PC-9 (cell line): ENCODE measurements at regions of chr19 and their contacts with region 1.

Region 1: GRCh38 chr19:10502524-10503001 is 593 bp downstream of the KEAP1 start:
- DNase-seq: peak; percentile 77 to 95
- H3K4me3 ChIP-seq: peak overlapping the region; percentile 82
- H3K27ac ChIP-seq: peak overlapping the region; percentile 94
- H3K4me1 ChIP-seq: peaks cover 16% of the 10 kb centered on the region
- H3K27me3 ChIP-seq: no peaks in the 10 kb centered on the region
- CTCF ChIP-seq: no peak

Region 2: GRCh38 chr19:10403137-10404021 is 99.2 kb before region 1 on chr19 and contains the start of gene CDC37:
- CTCF ChIA-PET with region 1: interaction called, 16 read pairs
- POLR2A ChIA-PET with region 1: no interaction called
- intact Hi-C with region 1: no loop called
- DNase-seq: peak; percentile 90 to 96
- H3K4me3 ChIP-seq: peak within 1 kb of the TSS; percentile 89
- H3K27ac ChIP-seq: peak within 1 kb of the TSS; percentile 39
- H3K4me1 ChIP-seq: peaks cover 20% of the 10 kb centered on the region
- H3K27me3 ChIP-seq: peaks cover 21% of the 10 kb centered on the region; the same call in 1 of the 2 replicates
- CTCF ChIP-seq: no peak
- total RNA-seq, gene CDC37: 156 and 191 TPM in 2 replicates

Region 3: GRCh38 chr19:10543420-10544241 is 41.1 kb after region 1 on chr19 and contains the start of gene ATG4D:
- CTCF ChIA-PET with region 1: interaction called, 6 read pairs
- POLR2A ChIA-PET with region 1: no interaction called
- intact Hi-C with region 1: loop called (anchors 5 kb)
- DNase-seq: peak; percentile 87 to 95
- H3K4me3 ChIP-seq: peak within 1 kb of the TSS; percentile 82
- H3K27ac ChIP-seq: no peak within 1 kb of the TSS
- H3K4me1 ChIP-seq: peaks cover 6% of the 10 kb centered on the region; the same call in 1 of the 2 replicates
- H3K27me3 ChIP-seq: no peaks in the 10 kb centered on the region
- CTCF ChIP-seq: no peak
- total RNA-seq, gene ATG4D: 33.1 and 40.2 TPM in 2 replicates

Region 4: DNA sequence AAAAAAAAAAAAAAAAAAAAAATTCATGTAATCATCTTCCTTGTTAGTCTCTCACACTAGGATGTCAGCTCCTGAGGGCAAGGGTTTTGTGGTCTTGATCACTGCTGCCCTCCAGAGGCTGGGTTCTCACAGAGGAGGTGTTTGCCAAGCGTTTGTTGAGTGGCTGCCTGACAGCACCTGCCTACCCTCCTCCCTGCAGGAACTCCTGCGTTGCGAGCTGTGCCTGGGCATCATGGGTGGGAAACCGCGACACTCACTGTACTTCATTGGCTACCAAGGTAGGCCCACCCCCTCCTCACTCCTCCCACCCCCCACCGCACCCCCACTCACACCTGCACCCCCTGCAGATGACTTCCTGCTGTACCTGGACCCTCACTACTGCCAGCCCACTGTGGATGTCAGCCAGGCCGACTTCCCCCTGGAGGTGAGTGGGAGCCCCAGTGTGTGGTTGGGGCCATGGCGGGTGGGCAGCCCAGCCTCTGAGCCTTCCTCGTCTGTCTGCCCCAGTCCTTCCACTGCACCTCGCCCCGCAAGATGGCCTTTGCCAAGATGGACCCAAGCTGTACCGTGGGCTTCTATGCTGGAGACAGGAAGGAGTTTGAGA is 49.2 kb after region 1 on chr19:
- CTCF ChIA-PET with region 1: interaction called, 17 read pairs
- POLR2A ChIA-PET with region 1: interaction called, 3 read pairs
- intact Hi-C with region 1: no loop called
- DNase-seq: peak; percentile 45 to 72
- H3K4me3 ChIP-seq: no peak overlapping the region
- H3K27ac ChIP-seq: no peak overlapping the region
- H3K4me1 ChIP-seq: no peaks in the 10 kb centered on the region
- H3K27me3 ChIP-seq: no peaks in the 10 kb centered on the region
- CTCF ChIP-seq: peak; percentile 46; the same call in 1 of the 2 replicates

Region 5: DNA sequence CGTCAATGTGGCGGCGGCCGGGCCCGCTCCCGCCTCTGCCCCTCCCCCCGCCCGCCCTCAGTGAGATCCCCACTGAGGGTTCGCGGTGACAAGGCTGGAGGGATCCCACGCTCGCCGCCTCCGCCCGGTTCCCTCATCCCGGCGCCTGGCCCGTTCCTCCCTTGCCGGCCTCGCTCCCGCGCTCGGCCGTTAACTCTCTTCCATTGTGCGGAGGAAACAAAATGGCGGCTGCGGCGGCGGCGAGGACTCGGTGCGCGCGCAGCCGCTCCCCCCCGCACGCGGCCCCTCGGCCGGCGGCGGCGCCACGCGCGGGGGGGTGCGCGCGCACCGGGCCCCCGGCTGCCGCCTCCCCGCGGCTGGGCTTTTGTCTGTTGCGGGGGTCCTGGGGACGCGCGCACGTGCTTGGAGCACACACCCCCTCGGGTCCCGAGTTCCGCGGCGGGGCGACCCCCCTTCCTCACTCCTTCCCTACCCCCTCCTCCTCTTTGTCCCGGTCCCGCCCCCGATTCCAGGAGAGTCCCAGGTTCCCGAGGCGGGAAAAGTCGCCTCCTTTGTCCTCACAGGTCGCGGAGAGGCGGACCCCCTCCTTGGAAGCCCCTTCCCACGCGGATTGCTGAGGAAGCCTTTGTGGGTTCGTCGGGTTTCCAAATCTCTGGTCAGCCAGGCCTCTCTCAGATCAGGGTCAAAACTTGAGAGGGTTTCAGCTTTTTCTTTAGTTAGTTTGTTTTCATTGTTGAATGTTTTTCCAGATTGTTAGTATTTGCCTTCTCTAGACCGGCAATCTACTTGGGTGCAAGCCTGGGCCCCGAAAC is 152.1 kb after region 1 on chr19:
- CTCF ChIA-PET with region 1: interaction called, 11 read pairs
- POLR2A ChIA-PET with region 1: no interaction called
- intact Hi-C with region 1: no loop called
- DNase-seq: peak in 1 of 2 experiments; percentile 36
- H3K4me3 ChIP-seq: peak overlapping the region; percentile 86
- H3K27ac ChIP-seq: peak overlapping the region; percentile 82
- H3K4me1 ChIP-seq: peaks cover 26% of the 10 kb centered on the region
- H3K27me3 ChIP-seq: no peaks in the 10 kb centered on the region
- CTCF ChIP-seq: no peak